Motor neuron (in vitro differentiated cells): ENCODE measurements at regions of chr6 and their contacts with region 1.

Region 1: DNA sequence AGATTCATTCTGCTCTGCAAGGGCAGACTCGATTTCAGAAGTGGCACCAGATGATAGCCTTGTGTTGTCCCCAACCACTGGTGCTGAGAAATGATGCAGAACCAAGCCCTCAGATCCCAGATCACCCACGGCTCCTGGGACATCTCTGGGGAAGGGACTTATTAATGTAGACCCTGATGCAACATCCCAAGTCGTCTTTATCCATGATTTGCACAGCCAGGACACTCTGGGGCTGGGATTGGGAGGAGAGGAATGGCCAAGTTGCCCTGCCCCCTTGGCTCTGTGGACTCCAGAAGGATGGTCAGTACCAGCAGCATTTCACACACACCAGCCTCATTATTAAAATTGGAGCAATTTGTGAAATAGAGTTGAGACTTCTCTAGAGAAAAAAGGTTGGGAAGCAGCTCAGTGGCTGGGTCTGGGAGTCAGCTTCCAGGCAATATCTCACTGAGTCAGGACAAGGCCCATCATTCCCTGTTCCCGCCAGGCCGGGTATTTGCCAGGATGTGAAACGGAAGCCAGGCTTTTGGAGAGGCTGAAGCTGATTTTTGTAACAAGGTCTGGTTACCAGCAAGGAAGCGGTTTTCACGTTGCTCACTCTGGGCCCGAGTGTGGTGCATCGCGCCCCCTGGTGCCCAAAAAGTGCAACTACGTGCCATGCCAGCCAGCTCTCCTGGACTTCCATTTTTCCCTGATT is 67.4 kb downstream of the ZBTB2 start:
- ATAC-seq: peak; percentile 36 to 90 (median 68)
- H3K4me3 ChIP-seq: no peak overlapping the region
- H3K27ac ChIP-seq: peak overlapping the region in 1 of 2 donors; percentile 13
- H3K4me1 ChIP-seq: peaks cover 9 to 10% of the 10 kb centered on the region in 2 donors

Region 2: DNA sequence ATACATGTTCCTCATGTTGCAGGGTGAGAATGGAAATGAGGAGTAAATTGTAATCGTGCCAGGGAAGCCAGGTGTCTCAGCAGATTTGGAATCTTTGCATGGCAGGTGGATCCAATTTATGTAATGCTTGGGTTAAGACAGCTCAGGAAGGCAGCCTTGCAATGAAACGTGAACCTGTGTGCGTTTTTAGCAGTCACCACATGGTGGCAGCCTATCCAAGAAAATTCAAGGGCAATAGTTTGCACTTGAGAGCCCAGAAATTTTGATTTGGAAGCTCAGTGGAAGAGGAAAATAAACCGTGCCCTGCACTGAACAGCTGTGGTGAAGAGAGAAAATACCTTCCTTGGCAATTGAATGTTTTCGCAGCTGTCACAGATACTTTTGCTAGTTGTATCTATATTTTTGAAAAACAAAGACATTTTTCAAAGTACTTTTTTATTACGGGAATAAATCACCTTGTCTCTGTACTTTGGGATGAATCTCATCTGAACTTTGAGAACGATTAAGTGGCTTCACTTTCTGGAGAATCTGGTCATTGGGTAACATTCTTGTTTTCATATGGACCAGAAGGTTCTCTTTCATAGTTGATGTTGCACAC is 432.0 kb before region 1 on chr6:
- in situ Hi-C with region 1: loop called in 4 of 9 experiments (anchors 10 to 25 kb)
- ATAC-seq: peak; percentile 11 to 80 (median 68)
- H3K4me3 ChIP-seq: no peak overlapping the region
- H3K27ac ChIP-seq: no peak overlapping the region
- H3K4me1 ChIP-seq: peaks cover 0 to 3% of the 10 kb centered on the region in 2 donors

Region 3: DNA sequence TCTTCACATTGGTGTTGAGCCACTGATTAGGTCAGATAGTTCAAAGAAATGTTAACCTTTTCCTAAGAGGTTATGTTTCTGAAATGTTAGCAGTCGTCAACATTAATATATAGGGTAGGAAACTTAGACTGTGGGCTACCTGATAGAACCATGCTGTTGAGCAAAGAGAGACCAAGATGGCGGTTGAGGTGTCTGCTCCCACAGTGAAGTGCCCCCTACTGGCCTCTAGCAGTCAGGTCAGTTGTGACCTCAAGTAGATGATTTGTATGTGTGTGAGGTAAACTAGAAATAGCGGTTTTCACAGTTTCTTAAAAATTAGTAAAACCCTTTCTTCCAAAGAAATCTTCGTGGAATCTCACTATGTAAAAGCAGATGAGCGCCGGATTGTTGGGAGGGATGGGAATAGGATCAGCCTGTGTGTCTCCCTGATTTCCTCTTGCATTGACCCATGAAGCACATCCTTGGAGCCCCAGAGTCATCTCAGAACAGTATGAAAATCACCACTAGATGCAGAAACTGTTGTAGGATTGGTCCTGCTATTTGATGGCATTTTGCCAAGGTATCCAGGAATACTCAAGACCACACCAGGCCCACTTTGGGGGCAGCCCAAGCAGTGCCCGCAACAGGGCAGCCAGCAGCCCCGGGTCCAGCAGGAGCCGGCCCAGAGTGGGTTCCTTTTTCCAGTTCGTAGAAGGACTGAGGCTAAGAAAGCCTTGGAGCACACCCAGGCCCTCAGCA is 418.0 kb before region 1 on chr6:
- in situ Hi-C with region 1: loop called in 1 of 9 experiments (anchors 25 kb)
- ATAC-seq: no peak
- H3K4me3 ChIP-seq: no peak overlapping the region
- H3K27ac ChIP-seq: no peak overlapping the region
- H3K4me1 ChIP-seq: peaks cover 14% of the 10 kb centered on the region in 2 donors

Region 4: GRCh38 chr6:151014404-151015100 is 309.4 kb before region 1 on chr6:
- in situ Hi-C with region 1: loop called in 7 of 9 experiments (anchors 10 to 25 kb)
- ATAC-seq: peak; percentile 14 to 89 (median 86)
- H3K4me3 ChIP-seq: no peak overlapping the region
- H3K27ac ChIP-seq: no peak overlapping the region
- H3K4me1 ChIP-seq: peaks cover 16% of the 10 kb centered on the region in 2 donors

Region 5: DNA sequence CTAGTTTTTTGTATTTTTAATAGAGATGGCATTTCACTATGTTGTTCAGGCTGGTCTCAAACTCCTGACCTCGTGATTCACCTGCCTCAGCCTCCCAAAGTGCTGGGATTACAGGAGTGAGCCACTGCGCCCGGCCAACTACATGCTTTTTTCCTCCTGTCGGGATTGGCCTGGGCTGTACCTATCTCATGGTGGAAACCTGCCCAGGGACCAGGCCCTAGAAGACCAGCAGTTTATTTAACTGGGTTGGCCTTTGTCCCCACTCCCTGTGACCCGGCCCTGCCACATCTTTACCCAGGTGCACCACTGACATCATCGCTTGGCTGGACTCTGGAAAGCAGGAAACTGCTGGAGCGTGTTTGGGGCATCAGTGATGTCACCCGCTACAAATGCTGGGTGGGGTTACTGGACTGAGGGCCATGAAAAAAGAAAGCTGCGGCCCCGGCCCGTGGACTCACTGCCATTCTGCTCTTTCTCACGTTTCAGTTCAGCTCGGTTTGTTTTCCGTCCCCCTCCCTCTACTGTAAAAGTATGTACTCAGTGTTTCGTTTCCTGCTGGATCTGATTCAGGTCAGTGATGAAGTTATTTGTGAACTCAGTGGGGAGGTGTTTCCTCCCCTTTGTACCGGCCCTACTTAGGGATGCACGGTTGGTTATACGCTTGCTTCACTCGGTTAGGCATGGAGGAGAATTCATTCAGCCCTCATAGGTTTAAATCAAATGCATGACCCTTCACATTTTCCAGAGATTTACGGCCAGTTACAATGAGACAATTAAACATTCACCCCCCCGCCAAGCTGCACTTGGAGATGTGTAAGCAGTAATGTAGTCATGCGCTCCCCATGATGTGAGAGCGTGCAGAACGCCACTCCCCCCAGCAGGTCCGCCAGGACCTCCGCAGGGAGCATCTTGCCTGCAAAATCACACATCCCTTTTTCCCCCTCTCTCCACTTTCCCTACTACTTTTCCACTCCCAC is 279.2 kb before region 1 on chr6:
- in situ Hi-C with region 1: no loop called
- ATAC-seq: peak in 5 of 8 experiments; percentile 59 to 73 (median 61)
- H3K4me3 ChIP-seq: peak overlapping the region in 2 of 5 donors; percentile 17 to 23
- H3K27ac ChIP-seq: peak overlapping the region; percentile 82 to 90
- H3K4me1 ChIP-seq: peaks cover 26 to 46% of the 10 kb centered on the region in 2 donors